PC-3 (cell line): ENCODE measurements at regions of chr16 and their contacts with region 1.

Region 1: GRCh38 chr16:69796351-69797118 is 34.4 kb downstream of the WWP2 start:
- DNase-seq: peak; percentile 67
- ATAC-seq: peak; percentile 76
- H3K4me3 ChIP-seq: no peak overlapping the region
- H3K27ac ChIP-seq: no peak overlapping the region
- H3K4me1 ChIP-seq: no peaks in the 10 kb centered on the region
- H3K27me3 ChIP-seq: no peaks in the 10 kb centered on the region
- CTCF ChIP-seq: peak; percentile 82

Region 2: GRCh38 chr16:69204172-69204571 is 592.4 kb before region 1 on chr16:
- CTCF ChIA-PET with region 1: no interaction called
- POLR2A ChIA-PET with region 1: no interaction called
- intact Hi-C with region 1: no loop called
- DNase-seq: no peak
- ATAC-seq: no peak
- H3K4me3 ChIP-seq: no peak overlapping the region
- H3K27ac ChIP-seq: no peak overlapping the region
- H3K4me1 ChIP-seq: peaks cover 19% of the 10 kb centered on the region
- H3K27me3 ChIP-seq: no peaks in the 10 kb centered on the region
- CTCF ChIP-seq: no peak

Region 3: DNA sequence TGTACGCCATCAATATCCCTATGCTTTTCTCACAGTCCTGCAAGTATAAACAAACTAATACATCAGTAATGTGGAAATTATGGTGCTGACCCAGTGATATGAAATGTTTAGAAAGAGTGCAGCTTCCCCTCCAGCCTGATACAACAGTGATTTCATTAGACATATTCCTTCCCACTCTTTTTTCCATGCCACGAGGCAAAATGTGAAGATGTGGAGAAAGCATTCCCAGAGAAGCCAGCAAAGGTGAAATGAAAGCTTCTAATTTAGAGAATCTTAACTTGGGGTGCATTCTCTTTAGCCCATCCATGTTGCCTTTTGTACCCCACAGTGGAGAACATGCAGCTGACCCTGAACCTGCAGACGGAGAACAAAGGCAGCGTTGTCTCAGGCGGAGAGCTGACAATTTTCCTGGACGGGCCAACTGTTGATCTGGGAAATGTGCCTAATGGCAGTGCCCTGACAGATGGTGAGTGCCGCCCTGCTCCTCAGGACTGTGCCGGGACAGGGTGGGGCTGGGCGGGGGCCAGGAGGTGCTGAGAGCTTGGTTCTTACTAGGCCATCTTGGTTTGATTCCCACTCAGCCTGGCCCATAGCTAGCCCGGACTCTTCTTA is 43.4 kb after region 1 on chr16:
- CTCF ChIA-PET with region 1: no interaction called
- POLR2A ChIA-PET with region 1: no interaction called
- intact Hi-C with region 1: no loop called
- DNase-seq: no peak
- ATAC-seq: no peak
- H3K4me3 ChIP-seq: no peak overlapping the region
- H3K27ac ChIP-seq: no peak overlapping the region
- H3K4me1 ChIP-seq: no peaks in the 10 kb centered on the region
- H3K27me3 ChIP-seq: no peaks in the 10 kb centered on the region
- CTCF ChIP-seq: no peak

Region 4: GRCh38 chr16:69861292-69862030 is 64.9 kb after region 1 on chr16:
- CTCF ChIA-PET with region 1: no interaction called
- POLR2A ChIA-PET with region 1: no interaction called
- intact Hi-C with region 1: loop called (anchors 1 kb)
- DNase-seq: no peak
- ATAC-seq: peak; percentile 73
- H3K4me3 ChIP-seq: no peak overlapping the region
- H3K27ac ChIP-seq: no peak overlapping the region
- H3K4me1 ChIP-seq: no peaks in the 10 kb centered on the region
- H3K27me3 ChIP-seq: no peaks in the 10 kb centered on the region
- CTCF ChIP-seq: no peak

Region 5: GRCh38 chr16:69930117-69930776 is 133.7 kb after region 1 on chr16:
- CTCF ChIA-PET with region 1: interaction called, 7 read pairs
- POLR2A ChIA-PET with region 1: no interaction called
- intact Hi-C with region 1: loop called (anchors 1 kb)
- DNase-seq: peak; percentile 68
- ATAC-seq: peak; percentile 89
- H3K4me3 ChIP-seq: no peak overlapping the region
- H3K27ac ChIP-seq: no peak overlapping the region
- H3K4me1 ChIP-seq: no peaks in the 10 kb centered on the region
- H3K27me3 ChIP-seq: no peaks in the 10 kb centered on the region
- CTCF ChIP-seq: peak; percentile 66